Sciatic nerve (tissue), 2 donors: ENCODE measurements at regions of chr9 and their contacts with region 1.

Region 1: GRCh38 chr9:127869310-127870152 is 7.9 kb downstream of the AK1 start:
- DNase-seq: peak; percentile 97
- ATAC-seq: peak; percentile 89

Region 2: DNA sequence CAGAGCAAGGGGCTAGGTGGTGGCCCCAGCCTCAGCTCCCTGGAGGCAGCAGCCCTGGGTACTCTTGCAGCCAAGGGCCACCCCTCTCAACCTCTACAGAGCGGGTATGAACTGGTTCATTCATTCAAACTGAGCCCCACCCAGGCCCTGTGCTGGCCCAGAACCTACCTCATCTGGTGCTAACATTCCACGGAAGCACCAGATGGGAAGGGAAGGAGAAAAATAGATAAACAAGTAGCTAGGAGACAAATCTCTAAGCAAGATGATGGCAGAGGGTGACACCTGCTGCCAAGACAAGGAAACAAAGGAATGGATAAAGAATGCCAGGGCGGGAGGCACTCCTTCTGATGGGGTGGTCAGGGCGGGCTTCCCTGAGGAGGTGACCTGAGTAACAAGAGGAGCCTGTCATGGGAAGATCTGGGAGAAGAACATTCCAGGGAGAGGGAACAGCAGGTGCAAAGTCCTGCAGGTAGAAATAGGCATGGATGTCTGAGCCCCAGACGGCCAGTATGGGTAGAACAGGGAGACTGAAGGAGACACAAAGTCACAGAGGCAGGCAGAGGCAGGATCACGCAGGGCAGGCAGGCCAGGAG is 41.2 kb after region 1 on chr9:
- intact Hi-C with region 1: loop called (anchors 5 kb)
- DNase-seq: no peak
- ATAC-seq: peak; percentile 58

Region 3: DNA sequence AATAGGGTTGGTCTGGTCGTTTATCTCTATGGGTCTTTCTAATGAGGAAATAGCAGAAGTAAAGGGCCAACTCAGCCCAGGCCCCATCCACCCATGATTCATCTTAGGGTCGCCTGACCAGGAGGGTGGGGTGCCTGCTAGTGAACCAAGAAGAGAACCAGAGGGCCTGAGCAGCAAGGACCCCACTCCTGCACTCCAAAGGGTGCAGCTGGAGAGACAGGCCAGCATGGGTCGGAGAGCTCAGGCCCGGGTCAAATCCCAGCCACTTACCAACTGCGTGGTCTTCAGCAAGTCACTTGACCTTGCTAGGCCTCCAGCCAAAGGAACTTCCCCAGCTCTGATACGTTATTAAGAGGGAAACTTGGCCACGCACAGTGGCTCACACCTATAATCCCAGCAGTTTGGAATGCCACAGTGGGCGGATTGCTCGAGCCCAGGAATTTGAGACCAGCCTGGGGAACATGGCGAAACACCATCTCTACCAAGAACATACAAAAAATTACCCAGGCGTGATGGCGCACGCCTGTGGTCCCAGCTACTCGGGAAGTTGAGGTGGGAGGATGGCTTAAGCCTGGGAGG is 294.9 kb after region 1 on chr9:
- intact Hi-C with region 1: no loop called
- DNase-seq: no peak
- ATAC-seq: no peak